HCT116 (cell line): ENCODE measurements at regions of chr3 and their contacts with region 1.

Region 1: GRCh38 chr3:88003115-88003755 is 55.6 kb downstream of the CGGBP1 start:
- DNase-seq: peak; percentile 50
- ATAC-seq: peak; percentile 58; the same call in 1 of the 2 replicates
- H3K4me3 ChIP-seq: no peak overlapping the region
- H3K27ac ChIP-seq: no peak overlapping the region
- H3K4me1 ChIP-seq: no peaks in the 10 kb centered on the region
- H3K27me3 ChIP-seq: no peaks in the 10 kb centered on the region
- CTCF ChIP-seq: peak; percentile 56 to 83 (median 61); a peak in 4 of 6 replicates
- POLR2A ChIP-seq: no peak
- RAD21 ChIP-seq: peak; percentile 79

Region 2: GRCh38 chr3:87260270-87260669 is 743.0 kb before region 1 on chr3:
- CTCF ChIA-PET with region 1: interaction called, 24 read pairs
- POLR2A ChIA-PET with region 1: no interaction called
- RAD21 ChIA-PET with region 1: interaction called in 1 of 2 experiments, 4 read pairs
- intact Hi-C with region 1: loop called (anchors 1 kb)
- DNase-seq: peak; percentile 44
- ATAC-seq: peak; percentile 63
- H3K4me3 ChIP-seq: no peak overlapping the region
- H3K27ac ChIP-seq: no peak overlapping the region
- H3K4me1 ChIP-seq: no peaks in the 10 kb centered on the region
- H3K27me3 ChIP-seq: no peaks in the 10 kb centered on the region
- CTCF ChIP-seq: peak; percentile 15 to 72 (median 61); a peak in 4 of 6 replicates
- POLR2A ChIP-seq: no peak
- RAD21 ChIP-seq: peak; percentile 43

Region 3: GRCh38 chr3:87350364-87351199 is 652.7 kb before region 1 on chr3:
- CTCF ChIA-PET with region 1: interaction called, 19 read pairs
- POLR2A ChIA-PET with region 1: no interaction called
- RAD21 ChIA-PET with region 1: no interaction called
- intact Hi-C with region 1: loop called (anchors 1 kb)
- DNase-seq: peak; percentile 38
- ATAC-seq: peak; percentile 99
- H3K4me3 ChIP-seq: no peak overlapping the region
- H3K27ac ChIP-seq: no peak overlapping the region
- H3K4me1 ChIP-seq: no peaks in the 10 kb centered on the region
- H3K27me3 ChIP-seq: no peaks in the 10 kb centered on the region
- CTCF ChIP-seq: peak; percentile 31 to 80 (median 78); a peak in 5 of 6 replicates
- POLR2A ChIP-seq: no peak
- RAD21 ChIP-seq: peak; percentile 62

Region 4: DNA sequence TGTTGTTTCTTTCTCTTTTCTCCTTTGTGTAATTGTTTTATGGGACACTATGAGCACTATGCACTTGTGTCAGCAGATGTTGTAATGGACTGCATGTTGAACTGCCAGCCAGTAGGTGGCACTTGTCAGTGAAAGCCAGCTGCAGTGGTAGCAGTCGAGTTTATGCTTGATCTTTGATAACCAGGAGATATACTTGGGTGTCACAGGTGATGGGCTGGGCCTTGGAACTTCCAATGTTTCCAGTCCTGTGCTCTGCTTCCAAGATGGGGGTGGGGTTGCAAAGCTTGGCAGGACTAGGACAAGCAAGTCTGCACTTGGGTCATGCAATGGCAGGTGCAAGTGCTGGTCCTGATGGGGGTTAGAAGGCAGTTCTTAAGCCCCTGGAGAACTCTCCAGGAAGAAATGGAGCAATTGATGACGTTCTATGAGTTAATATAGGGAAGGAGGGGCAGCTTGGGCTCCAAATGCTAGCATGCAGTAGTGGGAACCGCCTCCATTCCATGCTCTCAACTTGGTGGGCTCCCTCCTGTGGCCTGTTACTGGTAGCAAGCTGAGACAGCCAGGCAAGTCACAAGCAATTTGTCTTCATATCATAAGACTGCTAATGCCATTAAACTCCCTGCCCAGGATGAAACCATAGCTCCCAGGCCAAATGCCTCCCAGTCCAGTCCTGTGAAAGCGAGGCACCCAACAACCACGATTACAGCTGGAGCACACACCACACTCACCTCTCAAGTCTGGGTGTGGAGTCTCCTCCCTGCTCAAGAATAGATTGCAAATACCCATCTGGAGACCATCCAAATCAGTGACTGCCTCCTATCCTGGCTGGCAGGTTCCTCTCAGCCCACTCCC is 231.7 kb before region 1 on chr3:
- CTCF ChIA-PET with region 1: no interaction called
- POLR2A ChIA-PET with region 1: no interaction called
- RAD21 ChIA-PET with region 1: no interaction called
- intact Hi-C with region 1: loop called (anchors 5 kb)
- DNase-seq: peak; percentile 13
- ATAC-seq: peak; percentile 94
- H3K4me3 ChIP-seq: no peak overlapping the region
- H3K27ac ChIP-seq: no peak overlapping the region
- H3K4me1 ChIP-seq: no peaks in the 10 kb centered on the region
- H3K27me3 ChIP-seq: no peaks in the 10 kb centered on the region
- CTCF ChIP-seq: peak; percentile 34 to 88 (median 76); a peak in 5 of 6 replicates
- POLR2A ChIP-seq: no peak
- RAD21 ChIP-seq: peak; percentile 24; the same call in 1 of the 2 replicates